A549 (cell line): ENCODE measurements at regions of chr7 and their contacts with region 1.

Region 1: DNA sequence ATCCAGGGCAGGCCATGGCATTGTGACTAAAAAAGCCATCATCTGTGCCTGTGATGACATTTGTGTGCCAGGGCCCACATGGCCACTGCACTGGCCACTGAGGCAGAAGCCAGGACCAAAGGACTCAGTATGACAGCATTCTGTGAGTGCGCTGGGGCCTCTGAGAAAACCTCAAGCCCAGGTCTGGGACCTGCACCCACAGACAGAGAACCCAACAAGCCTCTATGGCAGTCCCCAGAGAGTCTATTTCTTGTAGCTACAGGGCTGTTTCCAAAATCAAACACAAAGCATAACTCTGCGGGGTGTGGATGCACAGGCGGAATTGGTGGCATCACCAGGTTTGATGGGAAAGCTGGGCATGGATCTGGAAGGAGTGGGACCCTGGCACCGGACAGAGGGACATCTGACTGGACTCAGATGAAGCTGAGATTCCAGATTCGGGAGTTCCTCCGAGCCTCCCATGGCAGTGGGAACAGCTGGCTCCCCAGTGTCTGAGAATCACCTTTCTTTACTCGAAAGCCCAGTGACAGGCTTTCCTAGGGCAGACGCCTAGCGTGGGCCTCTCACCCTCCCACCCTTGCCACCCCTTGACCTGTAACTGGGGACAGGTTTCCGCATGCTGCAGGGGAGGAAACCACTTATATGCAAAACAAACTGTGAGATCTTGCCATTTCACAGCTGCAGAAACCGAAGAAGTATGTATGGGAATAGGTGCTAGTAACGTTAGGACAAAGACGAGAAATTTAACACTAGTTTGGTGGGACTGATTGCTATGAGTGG is 70.6 kb upstream of the RHEB start:
- DNase-seq: no peak
- ATAC-seq: no peak
- H3K4me3 ChIP-seq: no peak overlapping the region
- H3K27ac ChIP-seq: no peak overlapping the region
- H3K4me1 ChIP-seq: peaks cover 16% of the 10 kb centered on the region; the same call in 2 of the 3 replicates
- CTCF ChIP-seq: no peak
- EP300 ChIP-seq: no peak
- POLR2A ChIP-seq: no peak
- RAD21 ChIP-seq: no peak

Region 2: DNA sequence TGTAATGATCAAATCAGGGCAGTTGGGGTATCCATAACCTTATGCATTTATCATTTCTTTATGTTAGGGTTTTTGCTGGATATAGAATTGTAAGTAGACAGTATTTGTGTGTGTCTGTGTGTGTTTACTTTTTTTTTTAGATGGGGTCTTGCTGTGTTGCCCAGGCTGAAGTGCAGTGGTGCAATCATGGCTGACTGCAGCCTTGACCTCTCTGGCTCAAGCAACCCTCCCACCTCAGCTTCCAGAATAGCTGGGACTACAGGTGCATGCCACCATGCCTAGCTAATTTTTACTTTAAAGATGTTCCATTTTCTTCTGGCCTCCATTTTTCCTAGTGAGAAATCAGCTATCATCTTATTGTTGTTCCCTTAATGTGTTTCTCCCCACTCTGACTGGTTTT is 60.4 kb before region 1 on chr7:
- CTCF ChIA-PET with region 1: no interaction called
- POLR2A ChIA-PET with region 1: no interaction called
- DNase-seq: no peak
- ATAC-seq: no peak
- H3K4me3 ChIP-seq: no peak overlapping the region
- H3K27ac ChIP-seq: no peak overlapping the region
- H3K4me1 ChIP-seq: no peaks in the 10 kb centered on the region
- CTCF ChIP-seq: no peak
- EP300 ChIP-seq: no peak
- POLR2A ChIP-seq: no peak
- RAD21 ChIP-seq: no peak

Region 3: GRCh38 chr7:151579644-151580043 is 10.6 kb before region 1 on chr7:
- CTCF ChIA-PET with region 1: interaction called, 10 read pairs
- POLR2A ChIA-PET with region 1: no interaction called
- DNase-seq: peak in 1 of 2 experiments; percentile 55
- ATAC-seq: no peak
- H3K4me3 ChIP-seq: no peak overlapping the region
- H3K27ac ChIP-seq: no peak overlapping the region
- H3K4me1 ChIP-seq: no peaks in the 10 kb centered on the region
- CTCF ChIP-seq: no peak
- EP300 ChIP-seq: no peak
- POLR2A ChIP-seq: no peak
- RAD21 ChIP-seq: no peak